Activated B cell treated with CpG ODN at 0.5 μM for 24 hours (primary cell): ENCODE measurements at regions of chr5 and their contacts with region 1.

Region 1: GRCh38 chr5:33713136-33713765 is 178.5 kb downstream of the ADAMTS12 start:
- DNase-seq: no peak
- ATAC-seq: peak; percentile 65
- H3K4me3 Mint-ChIP-seq: peak overlapping the region; percentile 48
- H3K27ac Mint-ChIP-seq: peak overlapping the region; percentile 82
- H3K4me1 Mint-ChIP-seq: peaks cover 43% of the 10 kb centered on the region
- H3K27me3 Mint-ChIP-seq: no peaks in the 10 kb centered on the region
- CTCF ChIP-seq: no peak

Region 2: DNA sequence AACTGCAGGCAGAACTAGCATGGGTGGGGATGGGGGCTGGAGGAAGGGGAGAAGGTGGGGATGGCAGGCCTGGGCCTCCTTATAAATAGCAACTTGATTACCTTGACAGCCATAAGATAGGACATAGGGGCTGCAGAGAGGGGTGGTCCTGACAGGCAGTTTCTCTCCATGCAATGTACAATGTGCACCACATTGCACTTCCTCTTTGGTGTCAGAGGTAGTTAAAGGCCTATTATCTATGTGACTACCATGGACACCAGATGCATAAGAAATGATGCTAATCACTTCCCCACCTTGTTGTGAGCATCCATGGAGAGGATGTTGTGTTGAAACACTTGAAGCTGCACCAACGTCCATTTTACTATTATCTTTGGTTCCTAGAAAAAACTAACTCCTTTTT is 1148.1 kb before region 1 on chr5:
- CTCF ChIA-PET with region 1: no interaction called
- POLR2A ChIA-PET with region 1: no interaction called
- intact Hi-C with region 1: no loop called
- DNase-seq: no peak
- ATAC-seq: no peak
- H3K4me3 Mint-ChIP-seq: no peak overlapping the region
- H3K27ac Mint-ChIP-seq: no peak overlapping the region
- H3K4me1 Mint-ChIP-seq: peaks cover 5% of the 10 kb centered on the region
- H3K27me3 Mint-ChIP-seq: no peaks in the 10 kb centered on the region
- CTCF ChIP-seq: no peak

Region 3: GRCh38 chr5:33675958-33676464 is 37.2 kb before region 1 on chr5:
- CTCF ChIA-PET with region 1: no interaction called
- POLR2A ChIA-PET with region 1: no interaction called
- intact Hi-C with region 1: loop called (anchors 2 kb)
- DNase-seq: no peak
- ATAC-seq: peak; percentile 37
- H3K4me3 Mint-ChIP-seq: peak overlapping the region; percentile 49
- H3K27ac Mint-ChIP-seq: no peak overlapping the region
- H3K4me1 Mint-ChIP-seq: peaks cover 5% of the 10 kb centered on the region
- H3K27me3 Mint-ChIP-seq: no peaks in the 10 kb centered on the region
- CTCF ChIP-seq: no peak

Region 4: GRCh38 chr5:33824516-33825195 is 111.4 kb after region 1 on chr5:
- CTCF ChIA-PET with region 1: no interaction called
- POLR2A ChIA-PET with region 1: no interaction called
- intact Hi-C with region 1: no loop called
- DNase-seq: no peak
- ATAC-seq: no peak
- H3K4me3 Mint-ChIP-seq: no peak overlapping the region
- H3K27ac Mint-ChIP-seq: no peak overlapping the region
- H3K4me1 Mint-ChIP-seq: no peaks in the 10 kb centered on the region
- H3K27me3 Mint-ChIP-seq: peaks cover 10% of the 10 kb centered on the region
- CTCF ChIP-seq: no peak

Region 5: DNA sequence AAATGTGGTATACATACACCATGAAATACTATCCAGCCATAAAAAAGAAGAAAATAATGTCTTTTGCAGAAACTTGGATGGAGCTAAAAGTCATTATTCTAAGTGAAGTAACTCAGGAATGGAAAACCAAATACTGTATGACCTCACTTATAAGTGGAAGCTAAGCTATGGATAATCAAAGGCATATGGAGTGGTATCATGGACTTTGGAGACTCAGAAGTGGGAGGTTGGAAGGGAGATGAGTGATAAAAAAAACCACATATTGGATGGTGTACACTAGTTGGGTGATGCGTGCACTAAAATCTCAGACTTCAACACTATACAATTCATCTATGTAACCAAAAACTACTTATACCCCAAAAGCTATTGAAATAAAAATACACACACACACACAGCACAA is 154.0 kb after region 1 on chr5:
- CTCF ChIA-PET with region 1: no interaction called
- POLR2A ChIA-PET with region 1: no interaction called
- intact Hi-C with region 1: no loop called
- DNase-seq: no peak
- ATAC-seq: no peak
- H3K4me3 Mint-ChIP-seq: no peak overlapping the region
- H3K27ac Mint-ChIP-seq: no peak overlapping the region
- H3K4me1 Mint-ChIP-seq: no peaks in the 10 kb centered on the region
- H3K27me3 Mint-ChIP-seq: no peaks in the 10 kb centered on the region
- CTCF ChIP-seq: no peak